Gastrocnemius medialis (tissue), 4 donors: ENCODE measurements at regions of chr17 and their contacts with region 1.

Region 1: GRCh38 chr17:42405963-42406495 is 17.0 kb downstream of the CAVIN1 start:
- DNase-seq: peak; percentile 65 to 82
- ATAC-seq: peak; percentile 36 to 48
- H3K4me3 ChIP-seq: no peak overlapping the region
- H3K27ac ChIP-seq: peak overlapping the region; percentile 89 to 100 (median 95)
- H3K4me1 ChIP-seq: peaks cover 54 to 60% of the 10 kb centered on the region in 2 donors
- H3K27me3 ChIP-seq: no peaks in the 10 kb centered on the region
- CTCF ChIP-seq: peak; percentile 90 to 95 (median 93)
- POLR2A ChIP-seq: no peak

Region 2: GRCh38 chr17:42312285-42313130 is 93.5 kb before region 1 on chr17:
- in situ Hi-C with region 1: no loop called
- intact Hi-C with region 1: loop called (anchors 2 kb)
- DNase-seq: peak; percentile 84 to 91
- ATAC-seq: peak; percentile 72 to 83
- H3K4me3 ChIP-seq: peak overlapping the region in 3 of 4 donors; percentile 12 to 53 (median 41)
- H3K27ac ChIP-seq: peak overlapping the region; percentile 84 to 95 (median 88)
- H3K4me1 ChIP-seq: peaks cover 16% of the 10 kb centered on the region in 2 donors
- H3K27me3 ChIP-seq: no peaks in the 10 kb centered on the region
- CTCF ChIP-seq: peak; percentile 32 to 77 (median 70)
- POLR2A ChIP-seq: no peak

Region 3: DNA sequence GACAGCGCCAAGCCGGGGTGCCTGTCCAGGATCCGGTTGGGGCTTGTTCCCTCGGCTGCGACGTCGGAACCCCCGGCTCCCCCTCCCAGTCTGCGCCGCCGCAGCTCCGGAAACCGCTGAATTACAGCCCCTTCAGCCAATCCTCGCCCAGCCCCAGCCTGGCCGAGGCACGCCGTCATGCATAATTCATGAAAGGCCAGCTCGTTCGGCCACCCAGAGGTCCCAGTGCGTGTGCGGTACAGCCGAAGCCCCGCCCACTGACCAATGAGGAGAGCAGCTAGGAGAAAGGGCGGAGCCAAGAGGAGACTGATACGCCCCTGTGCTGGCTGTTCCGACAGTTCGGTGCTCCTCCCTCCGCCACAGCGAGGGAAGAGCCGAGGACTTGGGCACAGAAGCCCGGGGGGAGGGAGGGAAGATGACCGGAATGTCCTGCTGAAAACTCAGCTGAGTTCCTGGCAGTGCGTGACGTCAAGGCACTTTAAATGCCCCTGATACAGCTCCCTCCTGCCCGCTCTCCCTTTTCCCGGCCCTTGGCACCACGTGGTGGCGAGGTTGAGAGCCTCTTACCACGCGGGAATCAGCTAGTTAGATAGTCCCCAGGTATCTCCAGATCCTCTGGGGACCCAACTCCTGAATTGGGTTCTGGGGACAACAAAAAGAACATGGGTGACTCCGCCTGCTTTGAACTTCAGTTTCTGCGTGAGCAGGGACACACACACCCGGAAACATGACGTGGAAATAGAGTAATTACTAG is 17.5 kb before region 1 on chr17 and contains the start of gene STAT3:
- in situ Hi-C with region 1: no loop called
- intact Hi-C with region 1: loop called (anchors 1 kb)
- DNase-seq: peak; percentile 100
- ATAC-seq: peak; percentile 87 to 94
- H3K4me3 ChIP-seq: peak within 1 kb of the TSS; percentile 93 to 98 (median 96)
- H3K27ac ChIP-seq: peak within 1 kb of the TSS; percentile 98 to 99 (median 99)
- H3K4me1 ChIP-seq: peaks cover 21 to 34% of the 10 kb centered on the region in 2 donors
- H3K27me3 ChIP-seq: no peaks in the 10 kb centered on the region
- CTCF ChIP-seq: peak in 1 of 5 experiments; percentile 19
- POLR2A ChIP-seq: peak; percentile 96 to 99
- total RNA-seq, gene STAT3: 88.4 to 203 (median 130) TPM

Region 4: DNA sequence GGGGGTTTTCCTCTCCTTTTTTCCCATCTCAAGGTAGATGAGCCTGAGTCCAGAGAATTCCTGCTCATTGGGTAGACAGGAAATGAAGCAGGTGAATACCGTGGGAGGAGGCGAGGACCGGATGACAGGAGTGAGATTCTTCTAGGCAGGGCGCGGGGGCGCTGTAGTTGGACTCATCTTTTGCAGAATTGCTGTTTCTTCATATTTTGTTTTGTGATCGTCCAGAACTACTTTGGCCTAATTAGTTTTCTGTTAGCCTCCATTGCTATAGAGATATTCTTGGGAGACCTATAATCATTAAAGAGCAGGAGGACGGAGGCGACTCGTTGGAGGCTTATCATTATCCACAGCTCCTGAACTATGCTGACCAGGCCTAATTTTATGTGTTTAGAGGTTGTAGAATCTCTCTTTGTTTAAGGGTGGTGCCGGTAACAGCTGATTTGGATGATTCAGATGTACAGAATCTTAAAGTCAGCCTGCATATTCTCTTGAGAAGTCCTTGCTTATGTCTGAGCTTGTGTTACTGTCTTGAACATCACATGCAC is 53.3 kb after region 1 on chr17:
- in situ Hi-C with region 1: no loop called
- intact Hi-C with region 1: loop called (anchors 5 kb)
- DNase-seq: peak; percentile 36 to 57
- ATAC-seq: peak; percentile 46 to 52
- H3K4me3 ChIP-seq: peak overlapping the region; percentile 78 to 95 (median 92)
- H3K27ac ChIP-seq: peak overlapping the region; percentile 97 to 98 (median 98)
- H3K4me1 ChIP-seq: peaks cover 35 to 38% of the 10 kb centered on the region in 2 donors
- H3K27me3 ChIP-seq: no peaks in the 10 kb centered on the region
- CTCF ChIP-seq: peak in 2 of 5 experiments; percentile 36 to 49
- POLR2A ChIP-seq: no peak

Region 5: DNA sequence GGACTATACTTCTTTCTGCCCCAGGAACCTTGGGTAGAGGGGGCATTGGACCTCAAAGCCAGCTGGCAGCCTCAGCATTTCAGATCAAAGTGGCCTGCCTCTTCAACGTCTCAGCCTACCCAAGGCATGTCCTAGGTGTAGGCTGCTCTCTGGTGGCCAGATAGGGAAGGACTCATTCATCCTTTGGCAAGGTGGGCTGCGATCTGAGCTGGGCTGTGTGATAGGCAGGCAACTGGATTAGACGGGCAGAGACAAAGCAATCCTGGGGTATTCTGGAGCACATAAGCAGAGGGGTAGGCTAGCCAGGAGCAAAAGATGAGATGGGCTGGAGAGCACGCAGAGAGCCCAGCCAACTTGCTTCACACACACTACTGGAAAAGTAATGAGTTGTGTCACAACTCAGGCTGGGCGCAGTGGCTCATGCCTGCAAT is 121.3 kb after region 1 on chr17:
- in situ Hi-C with region 1: loop called in 1 of 4 experiments (anchors 10 kb)
- intact Hi-C with region 1: no loop called
- DNase-seq: peak; percentile 59 to 85
- ATAC-seq: peak; percentile 72 to 75
- H3K4me3 ChIP-seq: no peak overlapping the region
- H3K27ac ChIP-seq: peak overlapping the region; percentile 77 to 89 (median 86)
- H3K4me1 ChIP-seq: peaks cover 31 to 38% of the 10 kb centered on the region in 2 donors
- H3K27me3 ChIP-seq: no peaks in the 10 kb centered on the region
- CTCF ChIP-seq: peak; percentile 81 to 88 (median 83)
- POLR2A ChIP-seq: no peak